ENCODE measurements at regions of chr1 and their contacts with region 1.

Region 1: GRCh38 chr1:3423245-3423829 is 31.1 kb upstream of the ARHGEF16 start:
- DNase-seq: peak; percentile 90
- ATAC-seq: peak; percentile 89

Region 2: DNA sequence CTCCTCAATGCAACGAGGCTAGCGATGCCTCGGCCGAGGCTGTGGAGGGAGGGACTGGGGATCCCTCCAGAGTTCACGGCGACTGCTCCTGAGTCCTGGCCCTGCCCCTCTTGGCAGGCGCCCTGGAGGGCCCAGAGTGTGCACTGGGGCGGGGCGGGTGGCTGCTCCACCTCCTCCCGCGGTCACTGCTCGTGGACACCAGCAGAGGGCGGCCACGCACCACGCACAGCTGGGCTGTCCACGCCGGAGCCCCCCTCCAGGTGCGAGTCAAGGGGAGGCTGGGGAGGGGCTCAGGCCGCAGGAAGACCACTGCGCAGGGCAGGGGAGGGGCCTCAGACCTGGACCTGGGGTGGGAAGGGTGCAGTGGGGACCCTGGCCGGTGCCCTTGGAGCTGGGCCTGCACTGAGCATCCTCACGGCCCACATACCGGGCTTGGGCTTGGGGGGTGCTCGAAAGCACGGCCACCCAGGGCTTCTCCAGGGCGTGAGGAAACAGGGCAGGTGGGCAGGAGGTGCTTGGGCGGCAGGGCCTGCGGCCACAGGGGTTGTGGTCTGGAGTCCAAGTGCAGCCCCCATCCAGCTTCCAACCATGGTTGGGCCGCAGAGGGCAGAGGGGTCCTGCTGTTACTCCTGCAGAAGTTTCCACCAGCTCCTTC is 601.2 kb before region 1 on chr1:
- intact Hi-C with region 1: loop called (anchors 5 kb)
- DNase-seq: peak; percentile 70
- ATAC-seq: peak; percentile 88

Region 3: GRCh38 chr1:2875707-2876561 is 547.4 kb before region 1 on chr1:
- intact Hi-C with region 1: loop called (anchors 5 kb)
- DNase-seq: no peak
- ATAC-seq: peak; percentile 76

Region 4: DNA sequence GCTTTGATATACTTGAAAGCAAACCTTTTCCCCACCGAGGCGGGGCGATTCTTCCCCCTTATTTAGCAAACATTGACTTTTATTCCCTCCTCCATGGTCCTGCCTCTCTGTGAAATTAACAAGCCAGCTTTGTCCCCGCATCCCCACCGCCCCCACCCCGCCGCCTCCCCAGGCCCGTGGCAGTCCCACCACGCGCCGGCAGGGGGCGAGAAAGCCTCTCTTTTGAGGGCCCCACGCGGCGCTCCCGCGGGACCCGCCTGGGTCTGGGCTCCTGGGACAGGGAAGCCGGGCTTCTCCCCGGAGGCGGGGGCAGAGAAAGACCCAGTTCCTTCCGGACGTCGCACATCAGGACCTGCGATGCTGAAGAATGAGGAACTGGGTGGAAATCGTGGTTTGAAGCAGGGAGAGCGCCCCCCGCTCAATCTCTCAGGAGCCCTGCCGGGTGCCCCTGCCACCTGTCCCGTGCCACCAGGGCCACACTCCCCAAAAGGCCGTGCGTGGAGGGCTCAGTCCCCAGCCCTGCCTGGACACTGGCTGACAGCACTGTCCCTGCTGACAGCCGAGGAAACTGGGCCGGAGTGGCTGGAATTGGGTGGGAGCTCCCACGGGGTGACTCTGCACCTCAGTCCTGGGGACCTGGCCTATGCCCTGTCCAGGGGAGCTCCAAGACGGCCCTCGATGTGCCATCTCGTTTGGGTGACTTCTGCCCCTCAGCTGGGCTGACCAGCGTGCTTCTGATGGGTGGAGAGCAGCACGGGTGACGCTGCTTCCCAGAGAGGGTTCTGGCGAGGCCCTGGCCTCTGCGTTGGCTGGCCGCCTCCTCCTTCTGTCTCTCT is 410.7 kb before region 1 on chr1:
- intact Hi-C with region 1: loop called (anchors 5 kb)
- DNase-seq: peak; percentile 75
- ATAC-seq: peak; percentile 93

Region 5: GRCh38 chr1:3618881-3619671 is 195.7 kb after region 1 on chr1:
- intact Hi-C with region 1: no loop called
- DNase-seq: peak; percentile 73
- ATAC-seq: peak; percentile 83

Measured in Right ventricle myocardium superior (tissue), 1 donor.